Activated naive CD4-positive, alpha-beta T cell treated with anti-CD3 and anti-CD28 coated beads, Interleukin-2, amount 10 ng/mL, durations not matched to agents 7 days and 5 days (primary cell): ENCODE measurements at regions of chr14 and their contacts with region 1.

Region 1: DNA sequence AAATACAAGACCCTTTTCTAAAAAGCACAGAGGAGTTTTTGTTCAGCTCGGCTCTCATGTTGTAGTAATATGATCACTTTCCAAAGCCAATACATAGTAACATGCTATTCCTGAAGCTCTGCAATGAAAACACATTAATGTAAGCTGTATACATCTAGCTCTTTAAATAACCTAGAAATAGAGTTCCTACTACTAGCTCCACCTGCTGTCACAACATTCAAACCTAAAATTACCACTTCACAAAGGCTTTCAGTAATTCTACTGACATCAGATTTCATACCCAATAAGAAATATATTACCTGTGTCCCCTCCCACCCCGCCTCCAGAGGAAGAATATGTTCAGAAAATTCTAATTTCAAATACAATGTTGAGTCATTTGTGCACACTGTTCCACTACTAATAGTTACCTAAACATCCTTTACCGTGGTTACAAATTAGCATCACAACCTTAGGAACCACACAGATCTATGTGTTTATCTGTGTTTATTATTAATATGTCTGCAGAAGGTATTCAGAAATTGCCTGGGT is 17.8 kb downstream of the EFCAB11 start:
- DNase-seq: no peak
- H3K4me3 Mint-ChIP-seq: no peak overlapping the region
- H3K27ac Mint-ChIP-seq: no peak overlapping the region
- H3K4me1 Mint-ChIP-seq: no peaks in the 10 kb centered on the region
- H3K27me3 Mint-ChIP-seq: peaks cover 3% of the 10 kb centered on the region

Region 2: GRCh38 chr14:89926717-89927116 is 10.0 kb before region 1 on chr14:
- CTCF ChIA-PET with region 1: interaction called, 12 read pairs
- DNase-seq: no peak
- H3K4me3 Mint-ChIP-seq: no peak overlapping the region
- H3K27ac Mint-ChIP-seq: no peak overlapping the region
- H3K4me1 Mint-ChIP-seq: no peaks in the 10 kb centered on the region
- H3K27me3 Mint-ChIP-seq: no peaks in the 10 kb centered on the region

Region 3: GRCh38 chr14:89955745-89956660 is 19.3 kb after region 1 on chr14 and contains the start of gene TDP1:
- CTCF ChIA-PET with region 1: interaction called, 11 read pairs
- DNase-seq: peak; percentile 98
- H3K4me3 Mint-ChIP-seq: peak within 1 kb of the TSS; percentile 97
- H3K27ac Mint-ChIP-seq: peak within 1 kb of the TSS; percentile 99
- H3K4me1 Mint-ChIP-seq: peaks cover 66% of the 10 kb centered on the region
- H3K27me3 Mint-ChIP-seq: peaks cover 3% of the 10 kb centered on the region